ENCODE measurements at regions of chr10 and their contacts with region 1.

Region 1: GRCh38 chr10:4767033-4767814 is 58.8 kb upstream of the AKR1E2 start:
- DNase-seq: no peak
- H3K4me3 Mint-ChIP-seq: no peak overlapping the region
- H3K27ac Mint-ChIP-seq: no peak overlapping the region
- H3K4me1 Mint-ChIP-seq: no peaks in the 10 kb centered on the region
- H3K27me3 Mint-ChIP-seq: peaks cover 39% of the 10 kb centered on the region

Region 2: DNA sequence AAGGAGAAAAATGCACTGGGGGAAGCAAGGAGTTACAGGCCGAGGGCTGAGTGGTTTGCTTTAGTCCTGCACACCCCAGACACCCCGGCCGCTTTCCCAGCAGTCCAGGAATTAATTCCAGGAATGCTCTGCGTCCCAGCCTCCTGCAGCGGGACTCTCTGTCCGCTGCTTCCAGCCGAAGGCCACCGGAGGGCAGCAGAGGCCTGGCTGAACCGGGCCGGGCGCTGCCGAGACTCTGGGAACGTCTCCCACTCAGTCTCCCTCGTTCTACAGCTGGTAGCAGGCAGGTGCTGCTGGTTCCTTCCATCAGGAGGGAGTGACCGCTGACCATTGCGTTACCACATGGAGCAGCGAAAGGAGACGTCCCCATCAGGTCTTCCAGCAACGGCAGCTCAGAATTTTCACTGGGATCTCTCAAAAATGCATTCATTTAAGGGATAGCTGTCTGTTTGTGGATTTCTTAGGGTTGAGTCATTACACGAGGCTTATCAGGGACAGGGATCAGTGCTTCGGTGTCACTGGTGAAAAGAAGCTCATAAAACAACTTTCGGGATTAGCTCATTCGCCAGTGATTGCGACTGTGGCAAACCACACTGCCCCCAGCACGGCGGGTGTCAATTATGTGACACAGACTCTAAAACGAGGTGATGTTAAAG is 1569.7 kb before region 1 on chr10:
- intact Hi-C with region 1: loop called (anchors 2 kb)
- DNase-seq: peak; percentile 91
- H3K4me3 Mint-ChIP-seq: peak overlapping the region; percentile 67
- H3K27ac Mint-ChIP-seq: peak overlapping the region; percentile 81
- H3K4me1 Mint-ChIP-seq: peaks cover 17% of the 10 kb centered on the region
- H3K27me3 Mint-ChIP-seq: peaks cover 89% of the 10 kb centered on the region

Region 3: DNA sequence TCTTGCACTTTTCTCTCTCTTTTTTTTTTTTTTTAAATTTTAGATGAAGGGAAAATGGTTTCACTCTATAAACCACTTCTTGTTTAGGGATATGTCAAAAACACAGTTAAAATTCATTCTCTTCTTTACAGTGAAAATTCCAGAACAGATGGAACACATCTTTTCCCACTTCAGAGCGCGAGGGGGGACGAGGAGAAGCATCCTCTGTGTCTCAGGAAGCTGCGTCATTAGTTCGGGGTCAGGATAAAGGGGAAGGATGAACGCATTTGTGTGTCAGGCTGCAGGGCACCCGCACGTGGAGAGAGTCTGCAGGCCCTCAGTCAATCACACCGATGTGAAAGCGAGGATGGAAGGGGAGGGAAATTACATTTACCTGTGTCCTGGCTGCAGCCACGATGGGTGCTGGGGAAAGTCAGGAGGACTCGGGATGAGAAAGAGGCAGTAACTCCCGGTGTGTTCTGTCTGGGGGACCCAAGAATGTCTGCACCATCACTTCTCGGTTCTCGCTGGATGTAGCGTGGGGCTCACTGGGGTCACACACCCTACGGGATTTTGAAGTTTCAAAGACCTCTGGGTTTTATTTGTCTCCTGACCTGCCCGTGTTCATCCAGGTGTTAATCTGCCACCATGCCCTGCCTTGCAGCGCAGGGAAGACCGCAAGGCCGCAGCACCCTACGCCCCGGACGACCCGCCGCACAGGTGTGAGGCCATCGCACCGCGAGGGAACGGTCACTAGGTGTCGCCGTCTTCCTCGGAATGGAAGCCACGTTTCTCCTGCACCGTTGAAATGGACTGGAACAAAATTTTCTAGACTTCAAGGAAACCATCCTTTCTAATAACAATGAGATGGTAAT is 1527.9 kb before region 1 on chr10:
- intact Hi-C with region 1: loop called (anchors 2 kb)
- DNase-seq: peak; percentile 92
- H3K4me3 Mint-ChIP-seq: no peak overlapping the region
- H3K27ac Mint-ChIP-seq: no peak overlapping the region
- H3K4me1 Mint-ChIP-seq: peaks cover 3% of the 10 kb centered on the region
- H3K27me3 Mint-ChIP-seq: peaks cover 49% of the 10 kb centered on the region

Region 4: GRCh38 chr10:4849555-4850242 is 82.5 kb after region 1 on chr10:
- intact Hi-C with region 1: no loop called
- DNase-seq: peak; percentile 96
- H3K4me3 Mint-ChIP-seq: peak overlapping the region; percentile 20
- H3K27ac Mint-ChIP-seq: peak overlapping the region; percentile 27
- H3K4me1 Mint-ChIP-seq: peaks cover 11% of the 10 kb centered on the region
- H3K27me3 Mint-ChIP-seq: no peaks in the 10 kb centered on the region

Measured in activated CD4-positive, alpha-beta T cell treated with anti-CD3 and anti-CD28 coated beads, Interleukin-2, amount 10 ng/mL, durations not matched to agents 24 days and 14 days (primary cell).